ENCODE measurements at regions of chr9 and their contacts with region 1.

Region 1: GRCh38 chr9:306887-307286 is 92.2 kb downstream of the DOCK8 start:
- DNase-seq: no peak
- H3K4me3 ChIP-seq: no peak overlapping the region
- H3K27ac ChIP-seq: no peak overlapping the region
- H3K4me1 ChIP-seq: peaks cover 0 to 14% (median 0%) of the 10 kb centered on the region in 3 donors
- H3K27me3 ChIP-seq: no peaks in the 10 kb centered on the region
- CTCF ChIP-seq: peak in 4 of 6 experiments; percentile 20 to 54 (median 34)
- POLR2A ChIP-seq: no peak

Region 2: GRCh38 chr9:214648-215493 is 92.0 kb before region 1 on chr9 and contains the start of gene DOCK8:
- intact Hi-C with region 1: loop called (anchors 10 kb)
- DNase-seq: peak; percentile 46
- H3K4me3 ChIP-seq: peak within 1 kb of the TSS; percentile 66 to 88 (median 70)
- H3K27ac ChIP-seq: peak within 1 kb of the TSS; percentile 89 to 92 (median 89)
- H3K4me1 ChIP-seq: peaks cover 7 to 45% (median 14%) of the 10 kb centered on the region in 3 donors
- H3K27me3 ChIP-seq: peaks cover 0 to 11% (median 0%) of the 10 kb centered on the region in 4 donors
- CTCF ChIP-seq: peak in 5 of 6 experiments; percentile 30 to 53 (median 39)
- POLR2A ChIP-seq: peak in 2 of 4 donors; percentile 37 to 67
- total RNA-seq, gene DOCK8: 6.9 to 21.6 (median 15.2) TPM

Region 3: GRCh38 chr9:581673-582497 is 275.0 kb after region 1 on chr9:
- intact Hi-C with region 1: no loop called
- DNase-seq: no peak
- H3K4me3 ChIP-seq: no peak overlapping the region
- H3K27ac ChIP-seq: no peak overlapping the region
- H3K4me1 ChIP-seq: peaks cover 0 to 13% (median 0%) of the 10 kb centered on the region in 3 donors
- H3K27me3 ChIP-seq: no peaks in the 10 kb centered on the region
- CTCF ChIP-seq: peak in 1 of 6 experiments; percentile 6
- POLR2A ChIP-seq: no peak

Region 4: DNA sequence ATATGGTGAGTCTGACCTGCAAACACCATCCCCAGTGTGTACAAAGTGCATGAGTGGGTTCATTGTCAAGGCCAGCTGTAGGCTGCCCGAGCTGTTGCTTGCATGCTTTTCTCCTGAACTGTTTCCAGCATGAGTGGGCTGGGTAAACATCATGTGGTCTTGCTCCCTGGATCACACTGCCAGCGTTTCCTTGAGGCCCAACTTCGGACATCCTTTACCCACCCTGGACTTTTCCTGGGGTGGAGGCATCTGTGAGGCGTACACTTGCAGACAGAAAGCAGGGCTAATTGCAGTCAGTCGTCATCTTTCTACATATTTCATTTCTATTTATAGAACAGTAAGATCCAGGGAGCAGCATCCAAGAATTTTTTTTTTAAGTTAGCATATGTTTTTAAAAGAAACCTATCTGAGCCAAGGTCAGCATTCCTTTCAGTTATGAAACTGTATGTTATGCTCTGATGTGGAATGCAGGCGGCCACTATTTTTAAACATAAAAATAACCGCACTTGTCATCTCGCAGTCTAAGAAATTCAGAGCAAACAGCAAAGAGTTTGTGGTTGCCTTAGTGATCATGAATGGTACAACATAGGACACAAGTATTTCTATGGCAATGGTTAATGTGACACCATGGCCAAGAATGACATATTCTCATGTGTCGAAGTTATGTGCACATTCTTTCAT is 428.1 kb after region 1 on chr9:
- intact Hi-C with region 1: no loop called
- DNase-seq: no peak
- H3K4me3 ChIP-seq: no peak overlapping the region
- H3K27ac ChIP-seq: peak overlapping the region in 3 of 4 donors; percentile 84 to 88 (median 87)
- H3K4me1 ChIP-seq: peaks cover 19 to 56% (median 28%) of the 10 kb centered on the region in 3 donors
- H3K27me3 ChIP-seq: no peaks in the 10 kb centered on the region
- CTCF ChIP-seq: no peak
- POLR2A ChIP-seq: no peak

Measured in esophagus squamous epithelium (tissue), 5 donors.